Activated naive CD4-positive, alpha-beta T cell treated with anti-CD3 and anti-CD28 coated beads for 36 hours (primary cell): ENCODE measurements at regions of chr3 and their contacts with region 1.

Region 1: GRCh38 chr3:44198284-44199269 is 43.1 kb upstream of the TOPAZ1 start:
- DNase-seq: peak; percentile 87
- H3K4me3 Mint-ChIP-seq: no peak overlapping the region
- H3K27ac Mint-ChIP-seq: no peak overlapping the region
- H3K4me1 Mint-ChIP-seq: no peaks in the 10 kb centered on the region
- H3K27me3 Mint-ChIP-seq: peaks cover 8% of the 10 kb centered on the region

Region 2: DNA sequence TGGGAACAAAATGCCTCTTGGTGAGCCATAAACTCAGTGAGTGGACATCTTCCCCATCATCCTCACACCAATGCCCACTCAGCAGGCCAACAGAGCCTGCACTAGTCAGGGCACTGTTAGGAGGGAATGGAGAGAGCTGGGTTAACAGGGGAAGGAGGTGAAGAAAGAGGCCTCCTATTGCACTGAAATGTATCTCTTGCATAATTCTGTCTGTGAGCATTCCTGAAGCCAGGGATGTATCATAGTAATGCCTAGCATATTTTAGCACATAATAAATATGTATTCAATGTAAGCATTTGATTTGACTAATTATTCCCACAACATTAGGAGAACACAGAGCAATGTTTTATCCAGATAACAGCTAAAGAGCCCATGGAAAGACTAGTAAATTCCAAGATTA is 658.0 kb before region 1 on chr3:
- CTCF ChIA-PET with region 1: no interaction called
- intact Hi-C with region 1: loop called (anchors 1 kb)
- DNase-seq: no peak
- H3K4me3 Mint-ChIP-seq: no peak overlapping the region
- H3K27ac Mint-ChIP-seq: no peak overlapping the region
- H3K4me1 Mint-ChIP-seq: peaks cover 2% of the 10 kb centered on the region
- H3K27me3 Mint-ChIP-seq: no peaks in the 10 kb centered on the region

Region 3: GRCh38 chr3:43855674-43856299 is 342.8 kb before region 1 on chr3:
- CTCF ChIA-PET with region 1: interaction called, 10 read pairs
- intact Hi-C with region 1: loop called (anchors 1 kb)
- DNase-seq: peak; percentile 71
- H3K4me3 Mint-ChIP-seq: no peak overlapping the region
- H3K27ac Mint-ChIP-seq: no peak overlapping the region
- H3K4me1 Mint-ChIP-seq: peaks cover 2% of the 10 kb centered on the region
- H3K27me3 Mint-ChIP-seq: peaks cover 46% of the 10 kb centered on the region

Region 4: DNA sequence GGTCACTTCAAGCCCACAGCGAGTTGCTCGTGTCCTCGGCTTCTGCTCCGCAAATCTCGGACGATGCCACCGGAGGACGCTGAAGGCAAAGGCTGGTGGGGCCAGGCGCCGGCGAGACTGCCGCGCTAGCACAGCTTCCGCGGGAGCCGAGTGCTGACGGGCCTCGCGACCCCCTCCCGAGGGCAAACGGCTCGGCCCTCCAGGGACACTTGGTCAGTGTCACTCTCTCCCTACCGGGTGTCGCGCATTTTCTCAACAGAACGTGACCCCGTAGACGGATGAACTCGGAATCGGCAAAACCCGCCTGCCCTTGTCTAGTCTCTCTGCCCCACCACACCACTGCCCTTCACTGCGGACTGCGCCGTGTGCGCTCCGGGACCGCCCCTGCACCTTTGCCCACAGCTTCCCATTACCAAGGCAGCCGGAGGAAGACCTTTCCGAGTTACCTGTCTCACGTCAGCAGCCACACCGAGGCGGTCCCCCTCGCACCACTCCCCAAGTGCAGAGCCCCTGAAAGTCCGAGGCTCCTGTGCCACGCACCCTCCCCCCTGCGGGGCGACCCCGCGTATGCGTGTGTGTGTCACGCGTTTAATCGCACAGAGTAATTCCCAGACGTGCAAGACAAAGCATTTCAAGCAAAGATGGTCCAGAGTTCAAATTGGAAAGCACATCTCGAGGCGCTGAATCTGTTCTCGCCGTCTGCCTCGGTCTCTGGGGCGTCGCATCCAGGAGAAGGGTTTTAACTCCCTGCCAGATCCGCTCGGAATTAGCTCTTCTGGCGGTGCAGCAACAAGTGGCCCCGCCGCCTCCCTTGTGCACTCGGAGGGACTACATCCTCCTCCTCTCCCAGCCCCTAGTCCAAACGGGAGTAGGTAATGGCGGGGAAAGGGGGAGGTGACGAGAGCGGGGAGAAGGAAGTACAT is 201.9 kb before region 1 on chr3:
- CTCF ChIA-PET with region 1: no interaction called
- intact Hi-C with region 1: loop called (anchors 1 kb)
- DNase-seq: peak; percentile 57
- H3K4me3 Mint-ChIP-seq: peak overlapping the region; percentile 70
- H3K27ac Mint-ChIP-seq: no peak overlapping the region
- H3K4me1 Mint-ChIP-seq: peaks cover 38% of the 10 kb centered on the region
- H3K27me3 Mint-ChIP-seq: peaks cover 74% of the 10 kb centered on the region

Region 5: GRCh38 chr3:44576613-44577012 is 378.0 kb after region 1 on chr3:
- CTCF ChIA-PET with region 1: no interaction called
- intact Hi-C with region 1: no loop called
- DNase-seq: no peak
- H3K4me3 Mint-ChIP-seq: no peak overlapping the region
- H3K27ac Mint-ChIP-seq: no peak overlapping the region
- H3K4me1 Mint-ChIP-seq: no peaks in the 10 kb centered on the region
- H3K27me3 Mint-ChIP-seq: peaks cover under 1% of the 10 kb centered on the region